Activated CD4-positive, alpha-beta T cell treated with anti-CD3 and anti-CD28 coated beads for 36 hours (primary cell): ENCODE measurements at regions of chr9 and their contacts with region 1.

Region 1: GRCh38 chr9:105127863-105128220 is 116.6 kb upstream of the SLC44A1 start:
- DNase-seq: peak; percentile 62
- ATAC-seq: peak; percentile 99
- H3K4me3 Mint-ChIP-seq: no peak overlapping the region
- H3K27ac Mint-ChIP-seq: peak overlapping the region; percentile 59
- H3K4me1 Mint-ChIP-seq: peaks cover 52% of the 10 kb centered on the region
- H3K27me3 Mint-ChIP-seq: no peaks in the 10 kb centered on the region

Region 2: GRCh38 chr9:104863180-104863883 is 264.5 kb before region 1 on chr9:
- CTCF ChIA-PET with region 1: no interaction called
- POLR2A ChIA-PET with region 1: no interaction called
- intact Hi-C with region 1: no loop called
- DNase-seq: peak; percentile 62
- ATAC-seq: peak; percentile 94
- H3K4me3 Mint-ChIP-seq: no peak overlapping the region
- H3K27ac Mint-ChIP-seq: no peak overlapping the region
- H3K4me1 Mint-ChIP-seq: peaks cover 7% of the 10 kb centered on the region
- H3K27me3 Mint-ChIP-seq: no peaks in the 10 kb centered on the region

Region 3: GRCh38 chr9:105064315-105065097 is 63.3 kb before region 1 on chr9:
- CTCF ChIA-PET with region 1: no interaction called
- POLR2A ChIA-PET with region 1: no interaction called
- intact Hi-C with region 1: loop called in 1 of 2 experiments (anchors 5 kb)
- DNase-seq: peak; percentile 10
- ATAC-seq: no peak
- H3K4me3 Mint-ChIP-seq: no peak overlapping the region
- H3K27ac Mint-ChIP-seq: peak overlapping the region; percentile 16
- H3K4me1 Mint-ChIP-seq: peaks cover 17% of the 10 kb centered on the region
- H3K27me3 Mint-ChIP-seq: no peaks in the 10 kb centered on the region

Region 4: GRCh38 chr9:105114964-105115728 is 12.7 kb before region 1 on chr9:
- CTCF ChIA-PET with region 1: interaction called, 3 read pairs
- POLR2A ChIA-PET with region 1: interaction called, 5 read pairs
- intact Hi-C with region 1: loop called in 1 of 2 experiments (anchors 1 kb)
- DNase-seq: peak; percentile 54
- ATAC-seq: peak; percentile 64
- H3K4me3 Mint-ChIP-seq: peak overlapping the region; percentile 7
- H3K27ac Mint-ChIP-seq: peak overlapping the region; percentile 58
- H3K4me1 Mint-ChIP-seq: peaks cover 25% of the 10 kb centered on the region
- H3K27me3 Mint-ChIP-seq: no peaks in the 10 kb centered on the region